Activated naive CD4-positive, alpha-beta T cell treated with anti-CD3 and anti-CD28 coated beads for 36 hours (primary cell): ENCODE measurements at regions of chr16 and their contacts with region 1.

Region 1: DNA sequence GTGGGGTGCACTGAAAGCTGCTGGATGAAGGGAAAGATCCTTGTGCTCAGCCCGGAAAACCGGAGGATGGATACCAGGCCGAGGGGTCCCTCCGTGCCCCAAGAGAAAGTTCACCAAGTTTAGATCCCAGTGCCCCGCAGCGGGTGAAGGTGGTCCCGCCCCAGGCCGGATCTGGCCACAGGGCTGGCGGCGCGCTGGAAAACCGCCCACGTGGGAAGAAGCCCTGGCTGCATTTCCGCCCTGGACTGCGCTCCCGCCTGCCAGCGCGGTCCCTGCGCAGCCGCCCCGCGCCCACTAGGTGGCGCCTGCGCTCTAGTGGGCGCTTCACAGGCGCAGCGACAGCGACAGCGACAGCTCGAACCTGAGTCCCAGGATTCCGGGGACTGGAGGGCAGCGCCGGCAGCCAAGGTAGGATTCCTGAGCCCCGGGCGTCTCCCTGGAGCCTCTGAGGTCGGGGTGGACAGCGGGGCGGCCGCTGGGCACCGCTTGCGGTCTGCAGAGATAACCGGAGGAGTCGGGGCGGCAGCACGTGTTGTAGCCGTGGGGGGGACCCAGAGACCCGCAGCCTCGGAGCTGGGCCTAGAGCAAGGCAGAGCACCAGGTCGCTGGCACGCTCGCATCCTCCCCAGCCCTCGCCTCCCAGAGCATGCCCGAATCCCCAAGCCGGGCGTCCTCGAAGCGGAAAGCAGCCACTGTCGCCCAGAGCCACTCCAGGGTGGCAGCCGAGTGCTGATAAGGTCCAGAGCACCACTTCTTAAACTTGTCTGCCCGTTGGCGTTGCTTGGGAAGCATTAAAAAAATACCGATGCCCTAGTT is at the start of gene CHD9:
- DNase-seq: peak; percentile 72
- H3K4me3 Mint-ChIP-seq: peak within 1 kb of the TSS; percentile 80
- H3K27ac Mint-ChIP-seq: no peak within 1 kb of the TSS
- H3K4me1 Mint-ChIP-seq: peaks cover 18% of the 10 kb centered on the region
- H3K27me3 Mint-ChIP-seq: peaks cover 3% of the 10 kb centered on the region
- total RNA-seq, gene CHD9: 9.4 to 9.7 TPM

Region 2: DNA sequence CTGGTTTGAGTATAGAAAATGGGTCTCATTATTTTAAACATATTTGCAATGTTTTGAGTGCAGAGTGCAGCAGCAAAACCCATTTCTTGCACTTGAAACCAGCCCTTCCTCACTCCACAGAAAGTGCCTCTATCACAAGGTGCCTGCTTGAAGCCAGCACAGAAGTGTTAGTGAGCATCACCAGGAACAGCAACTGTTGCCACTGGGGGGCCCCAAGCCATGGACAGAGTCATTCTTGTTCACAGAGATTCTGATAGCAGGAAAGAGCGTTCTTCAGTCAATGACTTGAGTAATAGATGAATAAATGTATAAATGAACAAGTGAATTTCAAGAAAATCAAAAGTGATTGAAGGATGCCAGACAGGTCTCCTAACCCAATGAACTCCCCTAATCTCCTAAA is 47.8 kb before region 1 on chr16:
- CTCF ChIA-PET with region 1: no interaction called
- intact Hi-C with region 1: no loop called
- DNase-seq: no peak
- H3K4me3 Mint-ChIP-seq: no peak overlapping the region
- H3K27ac Mint-ChIP-seq: no peak overlapping the region
- H3K4me1 Mint-ChIP-seq: no peaks in the 10 kb centered on the region
- H3K27me3 Mint-ChIP-seq: peaks cover 5% of the 10 kb centered on the region

Region 3: DNA sequence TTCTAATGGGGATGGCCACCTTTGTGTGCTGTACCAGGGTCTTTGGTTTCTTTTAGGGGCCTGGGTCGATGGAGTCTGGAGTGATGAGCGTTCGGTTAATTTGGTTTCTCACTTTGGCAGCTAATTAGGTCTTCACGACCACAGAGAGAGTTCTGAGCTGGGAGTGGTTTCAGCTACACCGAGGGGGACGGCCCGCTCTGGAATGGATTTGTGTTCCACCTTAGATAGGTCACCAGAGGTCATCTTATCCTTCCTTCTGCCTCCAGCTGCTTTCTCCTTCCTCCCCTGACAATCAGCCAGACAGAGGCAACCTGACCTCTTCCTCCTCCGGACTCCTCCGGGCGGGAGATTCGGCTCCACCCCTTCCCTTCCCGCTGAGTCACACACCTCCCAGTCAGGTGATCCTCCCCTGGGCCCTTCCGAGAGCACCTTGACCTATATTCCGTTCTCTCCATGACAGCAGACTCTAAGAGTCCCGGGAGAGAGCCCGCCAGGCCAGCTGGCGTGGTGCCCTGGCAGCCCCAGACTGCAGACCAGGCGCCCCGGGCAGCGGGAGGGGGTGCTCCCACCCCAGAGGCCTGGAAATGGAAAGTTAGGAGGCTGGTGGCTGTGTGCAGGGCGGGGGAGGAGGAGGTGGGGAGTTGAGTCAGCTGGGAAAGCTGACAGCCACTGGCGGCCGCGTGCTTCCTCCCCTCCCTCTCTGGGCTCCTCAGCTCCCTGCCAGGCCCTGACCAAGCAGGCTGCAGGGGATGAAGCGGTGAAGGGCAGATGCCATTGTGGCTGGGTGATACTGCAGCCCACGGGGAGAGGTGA is 44.6 kb after region 1 on chr16:
- CTCF ChIA-PET with region 1: interaction called, 6 read pairs
- intact Hi-C with region 1: loop called (anchors 1 kb)
- DNase-seq: peak; percentile 68
- H3K4me3 Mint-ChIP-seq: peak overlapping the region; percentile 79
- H3K27ac Mint-ChIP-seq: peak overlapping the region; percentile 54
- H3K4me1 Mint-ChIP-seq: peaks cover 14% of the 10 kb centered on the region
- H3K27me3 Mint-ChIP-seq: peaks cover 2% of the 10 kb centered on the region

Region 4: GRCh38 chr16:53142823-53143568 is 88.1 kb after region 1 on chr16:
- CTCF ChIA-PET with region 1: no interaction called
- intact Hi-C with region 1: no loop called
- DNase-seq: no peak
- H3K4me3 Mint-ChIP-seq: no peak overlapping the region
- H3K27ac Mint-ChIP-seq: no peak overlapping the region
- H3K4me1 Mint-ChIP-seq: peaks cover 5% of the 10 kb centered on the region
- H3K27me3 Mint-ChIP-seq: no peaks in the 10 kb centered on the region

Region 5: GRCh38 chr16:53207810-53208752 is 153.2 kb after region 1 on chr16:
- CTCF ChIA-PET with region 1: interaction called, 9 read pairs
- intact Hi-C with region 1: loop called (anchors 1 kb)
- DNase-seq: peak; percentile 30
- H3K4me3 Mint-ChIP-seq: peak overlapping the region; percentile 45
- H3K27ac Mint-ChIP-seq: peak overlapping the region; percentile 34
- H3K4me1 Mint-ChIP-seq: peaks cover 9% of the 10 kb centered on the region
- H3K27me3 Mint-ChIP-seq: no peaks in the 10 kb centered on the region

Region 6: DNA sequence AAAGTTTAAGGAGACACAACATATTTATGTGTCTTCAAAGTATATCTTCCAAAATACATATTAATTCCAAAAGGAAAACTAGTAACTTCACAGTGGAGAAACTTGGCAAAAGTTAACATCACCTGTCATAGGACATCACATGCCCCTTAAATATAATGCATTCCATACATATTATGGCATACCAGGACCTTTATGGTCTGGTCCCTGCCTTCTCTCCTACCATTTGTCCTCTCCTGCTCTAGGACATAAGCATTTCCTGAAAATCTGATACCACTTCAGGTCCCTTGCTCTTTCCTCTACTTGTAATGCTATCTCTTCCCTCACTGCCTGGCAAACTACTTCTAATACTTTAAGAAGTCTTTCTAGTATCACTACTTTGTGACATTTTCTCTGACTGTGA is 211.3 kb after region 1 on chr16:
- CTCF ChIA-PET with region 1: no interaction called
- intact Hi-C with region 1: no loop called
- DNase-seq: no peak
- H3K4me3 Mint-ChIP-seq: no peak overlapping the region
- H3K27ac Mint-ChIP-seq: no peak overlapping the region
- H3K4me1 Mint-ChIP-seq: no peaks in the 10 kb centered on the region
- H3K27me3 Mint-ChIP-seq: no peaks in the 10 kb centered on the region

Region 7: DNA sequence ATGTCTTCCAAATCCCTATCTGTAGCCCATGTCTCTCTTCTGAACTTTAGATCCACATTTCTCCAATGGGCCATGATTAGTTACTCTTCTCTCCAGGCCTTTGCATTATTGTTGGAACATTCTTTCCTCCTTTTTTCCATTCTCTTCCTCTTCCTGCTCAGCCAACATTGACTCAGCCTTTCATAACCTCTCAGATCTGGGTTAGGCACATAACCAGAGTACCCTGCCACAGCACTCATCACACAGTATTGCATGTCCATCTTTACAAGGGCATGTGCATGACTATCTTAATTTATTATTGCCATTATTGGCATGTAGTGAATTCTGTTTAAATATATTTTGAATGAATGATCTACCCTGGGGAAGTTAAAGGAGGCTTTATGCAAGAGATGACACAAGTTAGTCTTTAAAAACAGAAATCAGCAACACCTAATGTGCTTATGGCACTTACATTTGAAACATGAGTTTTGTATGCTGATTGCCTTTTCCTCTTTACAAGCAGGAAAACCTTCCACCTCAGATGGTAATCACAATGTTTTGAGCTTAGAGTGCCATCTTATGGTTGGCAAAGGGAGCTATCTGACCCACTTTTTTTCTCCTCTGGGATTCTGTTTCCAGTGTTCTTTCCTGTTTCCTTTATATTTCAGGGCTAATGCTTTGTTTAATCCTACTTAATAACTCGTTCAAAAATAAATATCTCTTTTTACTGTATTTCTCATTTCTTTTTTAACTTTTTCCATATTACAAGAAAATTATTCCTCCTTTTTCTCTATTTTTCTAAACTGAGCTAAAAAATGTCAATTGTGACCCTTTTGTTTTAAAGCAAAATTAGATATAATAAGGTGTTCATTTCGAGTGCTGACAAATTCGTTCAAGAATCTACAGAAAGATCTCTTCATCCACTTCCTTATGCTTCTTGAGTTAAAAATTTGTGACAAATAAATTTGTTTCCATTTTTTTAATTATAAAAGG is 228.4 kb after region 1 on chr16:
- CTCF ChIA-PET with region 1: interaction called, 8 read pairs
- intact Hi-C with region 1: loop called (anchors 1 kb)
- DNase-seq: no peak
- H3K4me3 Mint-ChIP-seq: no peak overlapping the region
- H3K27ac Mint-ChIP-seq: no peak overlapping the region
- H3K4me1 Mint-ChIP-seq: no peaks in the 10 kb centered on the region
- H3K27me3 Mint-ChIP-seq: no peaks in the 10 kb centered on the region

Region 8: GRCh38 chr16:53435066-53435688 is 380.3 kb after region 1 on chr16:
- CTCF ChIA-PET with region 1: no interaction called
- intact Hi-C with region 1: loop called (anchors 10 kb)
- DNase-seq: peak; percentile 71
- H3K4me3 Mint-ChIP-seq: peak overlapping the region; percentile 96
- H3K27ac Mint-ChIP-seq: peak overlapping the region; percentile 93
- H3K4me1 Mint-ChIP-seq: peaks cover 36% of the 10 kb centered on the region
- H3K27me3 Mint-ChIP-seq: no peaks in the 10 kb centered on the region